ENCODE measurements at regions of chr12 and their contacts with region 1.

Region 1: DNA sequence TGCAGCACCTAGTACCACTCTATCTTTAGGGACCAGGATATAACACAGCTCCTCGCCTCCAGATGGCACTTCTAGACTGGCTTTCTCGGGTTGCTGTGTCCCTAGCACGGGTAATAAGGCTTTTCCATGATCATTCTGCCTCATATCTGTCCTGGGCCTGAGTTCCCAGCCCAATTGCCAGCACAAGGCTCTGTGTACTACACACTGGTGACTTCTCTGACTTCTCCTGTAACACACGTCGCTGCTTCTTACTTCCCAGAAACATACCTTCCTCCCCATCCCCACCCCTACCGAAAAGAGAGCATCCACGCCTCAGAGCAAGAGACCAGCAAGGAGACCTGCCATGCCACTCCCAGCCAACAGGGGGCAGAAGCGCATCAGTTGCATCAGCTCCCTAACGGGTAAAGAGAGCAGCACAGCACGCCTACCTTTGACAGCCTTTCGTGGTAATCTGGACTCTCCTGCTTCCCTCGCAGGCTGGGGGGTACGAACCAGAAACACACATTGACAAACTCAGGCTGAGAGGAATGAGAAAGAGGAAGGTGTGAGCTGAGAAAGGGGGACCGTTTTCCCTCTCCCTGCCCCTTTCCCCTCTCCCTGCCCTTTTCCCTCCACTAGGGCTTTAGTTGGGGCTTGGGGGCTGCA is 21.2 kb upstream of the ZNF740 start:
- DNase-seq: peak; percentile 82 to 94 (median 90)
- ATAC-seq: peak; percentile 100
- H3K4me3 ChIP-seq: no peak overlapping the region
- H3K4me3 Mint-ChIP-seq: no peak overlapping the region
- H3K27ac ChIP-seq: no peak overlapping the region
- H3K27ac Mint-ChIP-seq: no peak overlapping the region
- H3K4me1 ChIP-seq: peaks cover 10% of the 10 kb centered on the region
- H3K4me1 Mint-ChIP-seq: peaks cover 7% of the 10 kb centered on the region
- H3K27me3 ChIP-seq: no peaks in the 10 kb centered on the region
- H3K27me3 Mint-ChIP-seq: no peaks in the 10 kb centered on the region
- CTCF ChIP-seq: peak; percentile 94

Region 2: GRCh38 chr12:51188359-51189051 is 1970.8 kb before region 1 on chr12:
- CTCF ChIA-PET with region 1: no interaction called
- POLR2A ChIA-PET with region 1: no interaction called
- intact Hi-C with region 1: no loop called
- DNase-seq: no peak
- ATAC-seq: no peak
- H3K4me3 ChIP-seq: no peak overlapping the region
- H3K4me3 Mint-ChIP-seq: no peak overlapping the region
- H3K27ac ChIP-seq: no peak overlapping the region
- H3K27ac Mint-ChIP-seq: no peak overlapping the region
- H3K4me1 ChIP-seq: no peaks in the 10 kb centered on the region
- H3K4me1 Mint-ChIP-seq: no peaks in the 10 kb centered on the region
- H3K27me3 ChIP-seq: no peaks in the 10 kb centered on the region
- H3K27me3 Mint-ChIP-seq: no peaks in the 10 kb centered on the region
- CTCF ChIP-seq: no peak

Region 3: GRCh38 chr12:53180220-53180930 is 21.1 kb after region 1 on chr12 and contains the starts of genes CSAD and ZNF740:
- CTCF ChIA-PET with region 1: interaction called, 23 read pairs
- POLR2A ChIA-PET with region 1: interaction called, 19 read pairs
- intact Hi-C with region 1: no loop called
- DNase-seq: peak; percentile 92 to 99 (median 97)
- ATAC-seq: peak; percentile 93
- H3K4me3 ChIP-seq: peak within 1 kb of the TSS; percentile 94
- H3K4me3 Mint-ChIP-seq: peak within 1 kb of the TSS; percentile 98
- H3K27ac ChIP-seq: peak within 1 kb of the TSS; percentile 87 to 92
- H3K27ac Mint-ChIP-seq: peak within 1 kb of the TSS; percentile 94
- H3K4me1 ChIP-seq: peaks cover 52% of the 10 kb centered on the region
- H3K4me1 Mint-ChIP-seq: peaks cover 57% of the 10 kb centered on the region
- H3K27me3 ChIP-seq: no peaks in the 10 kb centered on the region
- H3K27me3 Mint-ChIP-seq: no peaks in the 10 kb centered on the region
- CTCF ChIP-seq: no peak
- total RNA-seq, gene CSAD: 56.7 to 57.3 TPM
- total RNA-seq, gene ZNF740: 24.4 to 24.7 TPM

Region 4: DNA sequence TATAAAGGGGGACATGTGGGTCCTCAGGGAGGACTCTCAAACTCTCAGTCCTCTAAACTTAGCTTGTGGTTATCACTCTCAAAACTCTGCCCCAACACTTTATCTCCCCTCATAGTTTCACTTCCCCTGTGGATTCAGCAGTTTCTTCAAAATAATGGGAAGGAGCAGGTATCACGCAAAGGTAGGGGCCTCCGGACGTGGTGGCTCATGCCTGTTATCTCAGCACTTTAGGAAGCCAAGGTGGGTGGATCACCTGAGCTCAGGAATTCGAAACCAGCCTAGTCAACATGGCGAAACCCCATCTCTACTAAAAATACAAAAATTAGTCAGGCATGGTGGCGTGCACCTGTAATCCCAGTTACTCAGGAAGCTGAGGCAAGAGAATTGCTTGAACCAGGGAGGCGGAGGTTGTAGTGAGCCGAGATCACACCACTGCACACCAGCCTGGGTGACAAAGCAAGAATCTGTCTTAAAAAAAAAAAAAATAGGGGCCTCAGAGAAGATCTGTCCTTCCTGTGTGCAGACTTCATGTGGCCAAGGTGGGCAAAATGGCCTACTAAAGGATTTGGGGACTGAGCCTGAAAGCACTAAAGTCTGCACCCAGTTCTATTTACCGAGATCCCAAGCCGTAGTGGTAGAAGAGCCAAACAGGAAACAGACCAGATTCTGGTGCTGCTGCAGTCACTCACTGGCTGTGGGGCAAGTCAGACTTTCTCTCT is 41.3 kb after region 1 on chr12:
- CTCF ChIA-PET with region 1: interaction called, 32 read pairs
- POLR2A ChIA-PET with region 1: interaction called, 18 read pairs
- intact Hi-C with region 1: loop called in 1 of 2 experiments (anchors 1 kb)
- DNase-seq: peak in 4 of 14 experiments; percentile 40 to 53 (median 47)
- ATAC-seq: peak; percentile 53
- H3K4me3 ChIP-seq: peak overlapping the region; percentile 19
- H3K4me3 Mint-ChIP-seq: peak overlapping the region; percentile 86
- H3K27ac ChIP-seq: peak overlapping the region; percentile 31 to 63
- H3K27ac Mint-ChIP-seq: peak overlapping the region; percentile 88
- H3K4me1 ChIP-seq: peaks cover 89% of the 10 kb centered on the region
- H3K4me1 Mint-ChIP-seq: peaks cover 81% of the 10 kb centered on the region
- H3K27me3 ChIP-seq: no peaks in the 10 kb centered on the region
- H3K27me3 Mint-ChIP-seq: no peaks in the 10 kb centered on the region
- CTCF ChIP-seq: no peak

Region 5: GRCh38 chr12:53213348-53213747 is 54.0 kb after region 1 on chr12:
- CTCF ChIA-PET with region 1: interaction called, 23 read pairs
- POLR2A ChIA-PET with region 1: interaction called, 6 read pairs
- intact Hi-C with region 1: loop called in 1 of 2 experiments (anchors 1 kb)
- DNase-seq: peak; percentile 76 to 92 (median 82)
- ATAC-seq: peak; percentile 75
- H3K4me3 ChIP-seq: no peak overlapping the region
- H3K4me3 Mint-ChIP-seq: peak overlapping the region; percentile 61
- H3K27ac ChIP-seq: no peak overlapping the region
- H3K27ac Mint-ChIP-seq: peak overlapping the region; percentile 64
- H3K4me1 ChIP-seq: peaks cover 81% of the 10 kb centered on the region
- H3K4me1 Mint-ChIP-seq: peaks cover 68% of the 10 kb centered on the region
- H3K27me3 ChIP-seq: no peaks in the 10 kb centered on the region
- H3K27me3 Mint-ChIP-seq: no peaks in the 10 kb centered on the region
- CTCF ChIP-seq: peak; percentile 93

Region 6: GRCh38 chr12:53267999-53268647 is 108.8 kb after region 1 on chr12 and contains the start of gene ESPL1:
- CTCF ChIA-PET with region 1: interaction called, 10 read pairs
- POLR2A ChIA-PET with region 1: interaction called, 3 read pairs
- intact Hi-C with region 1: loop called in 1 of 2 experiments (anchors 5 kb)
- DNase-seq: peak; percentile 55 to 93 (median 74)
- ATAC-seq: peak; percentile 91
- H3K4me3 ChIP-seq: peak within 1 kb of the TSS; percentile 86
- H3K4me3 Mint-ChIP-seq: peak within 1 kb of the TSS; percentile 95
- H3K27ac ChIP-seq: peak within 1 kb of the TSS; percentile 40 to 50
- H3K27ac Mint-ChIP-seq: peak within 1 kb of the TSS; percentile 82
- H3K4me1 ChIP-seq: peaks cover 18% of the 10 kb centered on the region
- H3K4me1 Mint-ChIP-seq: peaks cover 19% of the 10 kb centered on the region
- H3K27me3 ChIP-seq: no peaks in the 10 kb centered on the region
- H3K27me3 Mint-ChIP-seq: no peaks in the 10 kb centered on the region
- CTCF ChIP-seq: peak; percentile 36
- total RNA-seq, gene ESPL1: 0.20 to 0.71 TPM

Region 7: GRCh38 chr12:53295070-53295890 is 136.0 kb after region 1 on chr12 and contains the start of gene PFDN5:
- CTCF ChIA-PET with region 1: no interaction called
- POLR2A ChIA-PET with region 1: interaction called, 7 read pairs
- intact Hi-C with region 1: loop called in 1 of 2 experiments (anchors 2 kb)
- DNase-seq: peak; percentile 76 to 96 (median 86)
- ATAC-seq: peak; percentile 92
- H3K4me3 ChIP-seq: peak within 1 kb of the TSS; percentile 69
- H3K4me3 Mint-ChIP-seq: peak within 1 kb of the TSS; percentile 99
- H3K27ac ChIP-seq: peak within 1 kb of the TSS; percentile 69 to 71
- H3K27ac Mint-ChIP-seq: peak within 1 kb of the TSS; percentile 97
- H3K4me1 ChIP-seq: peaks cover 38% of the 10 kb centered on the region
- H3K4me1 Mint-ChIP-seq: peaks cover 50% of the 10 kb centered on the region
- H3K27me3 ChIP-seq: no peaks in the 10 kb centered on the region
- H3K27me3 Mint-ChIP-seq: no peaks in the 10 kb centered on the region
- CTCF ChIP-seq: no peak
- total RNA-seq, gene PFDN5: 757 to 763 TPM

Region 8: GRCh38 chr12:53508534-53509199 is 349.4 kb after region 1 on chr12:
- CTCF ChIA-PET with region 1: no interaction called
- POLR2A ChIA-PET with region 1: no interaction called
- intact Hi-C with region 1: loop called in 1 of 2 experiments (anchors 1 kb)
- DNase-seq: peak; percentile 69 to 88 (median 78)
- ATAC-seq: peak; percentile 99
- H3K4me3 ChIP-seq: no peak overlapping the region
- H3K4me3 Mint-ChIP-seq: no peak overlapping the region
- H3K27ac ChIP-seq: no peak overlapping the region
- H3K27ac Mint-ChIP-seq: peak overlapping the region; percentile 52
- H3K4me1 ChIP-seq: peaks cover 9% of the 10 kb centered on the region
- H3K4me1 Mint-ChIP-seq: peaks cover 6% of the 10 kb centered on the region
- H3K27me3 ChIP-seq: no peaks in the 10 kb centered on the region
- H3K27me3 Mint-ChIP-seq: no peaks in the 10 kb centered on the region
- CTCF ChIP-seq: peak; percentile 87

Region 9: DNA sequence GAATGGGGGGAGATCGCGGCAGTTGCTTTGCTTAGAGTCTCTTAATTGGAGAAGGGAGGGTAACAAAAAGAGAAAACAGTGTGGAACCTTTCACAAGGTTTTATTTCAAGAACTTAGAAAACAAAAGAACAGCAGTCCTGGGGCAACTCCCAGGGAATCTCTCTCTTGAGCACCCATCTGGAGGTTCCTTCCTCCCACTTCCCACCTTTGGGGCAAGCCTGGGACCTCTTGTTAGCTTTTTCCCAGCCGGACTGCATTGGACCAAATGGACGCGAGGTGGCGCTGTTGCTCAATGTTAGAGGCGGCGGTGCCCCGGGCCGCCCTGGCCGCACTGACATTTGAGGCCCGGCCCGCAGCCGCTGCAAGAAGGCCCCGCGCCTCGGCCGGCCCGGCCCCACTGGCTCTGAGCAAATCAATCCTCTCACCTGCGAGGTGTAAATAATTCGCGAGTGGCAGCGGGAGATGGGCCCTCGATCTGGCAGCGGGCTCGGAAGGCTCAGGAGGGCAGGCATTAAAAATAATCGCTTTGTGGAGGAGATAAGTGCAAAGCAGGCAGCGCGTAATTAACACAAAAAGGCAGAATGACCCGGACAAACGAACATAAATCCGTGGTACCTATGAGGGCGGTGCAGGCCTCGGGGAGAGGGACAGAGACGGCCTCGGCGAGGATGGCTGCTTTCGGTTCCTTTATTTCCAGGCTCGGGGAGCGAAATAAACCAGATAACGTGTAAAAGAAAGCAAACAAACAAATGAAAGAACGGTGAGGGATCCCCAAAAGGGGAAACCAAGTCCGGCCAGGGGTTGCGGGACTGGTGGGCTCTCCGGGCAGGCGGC is 846.8 kb after region 1 on chr12:
- CTCF ChIA-PET with region 1: no interaction called
- POLR2A ChIA-PET with region 1: no interaction called
- intact Hi-C with region 1: no loop called
- DNase-seq: peak; percentile 68 to 91 (median 81)
- ATAC-seq: peak; percentile 80
- H3K4me3 ChIP-seq: peak overlapping the region; percentile 50
- H3K4me3 Mint-ChIP-seq: peak overlapping the region; percentile 84
- H3K27ac ChIP-seq: no peak overlapping the region
- H3K27ac Mint-ChIP-seq: no peak overlapping the region
- H3K4me1 ChIP-seq: peaks cover 41% of the 10 kb centered on the region
- H3K4me1 Mint-ChIP-seq: peaks cover 38% of the 10 kb centered on the region
- H3K27me3 ChIP-seq: peaks cover 93 to 96% of the 10 kb centered on the region in 2 experiments
- H3K27me3 Mint-ChIP-seq: peaks cover 100% of the 10 kb centered on the region
- CTCF ChIP-seq: peak; percentile 93

Measured in CD4-positive, alpha-beta T cell (primary cell).